ENCODE measurements at regions of chr6 and their contacts with region 1.

Region 1: GRCh38 chr6:108558372-108559096 is 2.2 kb upstream of the FOXO3 start:
- DNase-seq: peak; percentile 97
- H3K4me3 Mint-ChIP-seq: peak overlapping the region; percentile 97
- H3K27ac Mint-ChIP-seq: peak overlapping the region; percentile 98
- H3K4me1 Mint-ChIP-seq: peaks cover 28% of the 10 kb centered on the region
- H3K27me3 Mint-ChIP-seq: peaks cover 21% of the 10 kb centered on the region

Region 2: DNA sequence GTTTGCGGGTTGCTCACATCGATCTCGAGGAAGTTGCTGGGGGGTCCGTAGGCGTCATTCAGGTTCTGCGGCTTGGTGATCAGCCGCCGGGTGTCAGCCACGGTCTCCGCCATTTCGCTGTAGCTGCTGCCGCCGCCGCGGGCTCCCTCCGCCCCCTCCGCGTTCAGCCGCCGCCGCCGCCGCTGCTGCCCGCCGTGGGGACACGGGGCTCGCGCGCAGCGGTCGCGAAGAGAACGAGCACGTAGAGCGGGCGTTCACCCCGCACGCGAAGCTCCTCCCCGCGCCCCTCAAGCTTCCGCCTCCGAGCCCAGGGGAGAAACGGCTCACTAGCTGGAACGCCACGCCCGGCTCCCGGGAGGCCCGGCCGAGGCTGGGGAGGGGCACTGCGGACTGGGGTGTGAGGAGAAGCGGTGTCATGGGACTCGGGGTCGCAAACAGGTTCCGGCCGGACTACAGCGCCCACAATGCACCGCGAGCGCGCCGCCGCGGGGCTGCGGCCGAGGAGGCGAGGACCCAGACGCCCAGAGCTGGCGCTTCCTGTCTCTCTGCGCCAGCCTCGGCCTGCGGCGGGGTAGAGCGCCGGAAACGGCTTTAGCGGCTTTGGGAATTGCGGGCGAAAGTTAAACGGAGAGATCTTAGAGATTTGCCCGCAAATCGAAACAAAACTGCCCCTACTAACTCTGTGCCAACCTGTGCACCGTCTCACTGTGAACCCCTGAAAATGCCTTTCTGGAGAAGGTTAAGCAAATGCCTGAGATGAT is 297.5 kb before region 1 on chr6 and contains the start of gene SNX3:
- CTCF ChIA-PET with region 1: no interaction called
- POLR2A ChIA-PET with region 1: interaction called, 10 read pairs
- DNase-seq: peak; percentile 91
- H3K4me3 Mint-ChIP-seq: peak within 1 kb of the TSS; percentile 73
- H3K27ac Mint-ChIP-seq: peak within 1 kb of the TSS; percentile 77
- H3K4me1 Mint-ChIP-seq: peaks cover 24% of the 10 kb centered on the region
- H3K27me3 Mint-ChIP-seq: peaks cover 2% of the 10 kb centered on the region
- total RNA-seq, gene SNX3: 85.0 to 86.3 TPM

Region 3: GRCh38 chr6:108598305-108598863 is 39.9 kb after region 1 on chr6:
- CTCF ChIA-PET with region 1: no interaction called
- POLR2A ChIA-PET with region 1: interaction called, 14 read pairs
- DNase-seq: peak; percentile 31
- H3K4me3 Mint-ChIP-seq: no peak overlapping the region
- H3K27ac Mint-ChIP-seq: peak overlapping the region; percentile 44
- H3K4me1 Mint-ChIP-seq: peaks cover 31% of the 10 kb centered on the region
- H3K27me3 Mint-ChIP-seq: no peaks in the 10 kb centered on the region

Region 4: DNA sequence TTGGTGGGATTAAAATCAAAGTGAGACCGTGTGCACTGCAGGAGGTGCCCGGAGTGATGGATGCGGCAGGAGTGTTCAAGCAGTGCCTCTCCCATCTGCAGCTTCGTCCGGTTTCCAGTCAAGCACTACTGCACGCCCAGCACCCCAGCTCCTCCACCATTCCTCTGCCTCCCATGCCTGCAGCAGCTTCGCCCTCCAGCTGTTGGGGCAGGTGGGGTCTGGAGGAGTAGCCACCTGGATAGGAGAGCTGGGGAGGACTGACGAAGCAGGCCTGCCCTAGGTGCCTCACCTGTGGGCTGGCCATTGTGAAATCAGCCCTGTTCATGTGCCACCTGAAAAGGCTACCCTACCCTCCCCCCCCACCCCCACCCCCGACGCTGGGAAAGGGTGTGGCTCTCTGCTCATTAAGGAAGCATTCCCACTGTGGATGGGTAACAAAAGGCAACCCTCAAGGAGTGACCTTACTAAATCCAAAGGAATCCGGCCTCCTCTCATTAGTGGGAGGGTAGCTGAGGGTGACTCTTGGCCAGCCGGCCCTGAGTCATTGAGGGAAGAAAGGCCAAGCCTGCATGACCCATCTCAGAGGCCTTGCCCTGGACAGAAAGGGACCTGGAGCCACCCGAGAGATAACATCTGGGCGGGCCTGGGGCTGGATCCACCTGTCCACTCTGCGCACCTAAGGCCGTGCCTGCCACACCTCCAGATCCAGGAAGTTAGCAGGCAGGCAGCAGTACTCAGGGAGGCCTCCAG is 173.8 kb after region 1 on chr6:
- CTCF ChIA-PET with region 1: no interaction called
- POLR2A ChIA-PET with region 1: no interaction called
- DNase-seq: no peak
- H3K4me3 Mint-ChIP-seq: no peak overlapping the region
- H3K27ac Mint-ChIP-seq: no peak overlapping the region
- H3K4me1 Mint-ChIP-seq: no peaks in the 10 kb centered on the region
- H3K27me3 Mint-ChIP-seq: peaks cover 1% of the 10 kb centered on the region

Region 5: DNA sequence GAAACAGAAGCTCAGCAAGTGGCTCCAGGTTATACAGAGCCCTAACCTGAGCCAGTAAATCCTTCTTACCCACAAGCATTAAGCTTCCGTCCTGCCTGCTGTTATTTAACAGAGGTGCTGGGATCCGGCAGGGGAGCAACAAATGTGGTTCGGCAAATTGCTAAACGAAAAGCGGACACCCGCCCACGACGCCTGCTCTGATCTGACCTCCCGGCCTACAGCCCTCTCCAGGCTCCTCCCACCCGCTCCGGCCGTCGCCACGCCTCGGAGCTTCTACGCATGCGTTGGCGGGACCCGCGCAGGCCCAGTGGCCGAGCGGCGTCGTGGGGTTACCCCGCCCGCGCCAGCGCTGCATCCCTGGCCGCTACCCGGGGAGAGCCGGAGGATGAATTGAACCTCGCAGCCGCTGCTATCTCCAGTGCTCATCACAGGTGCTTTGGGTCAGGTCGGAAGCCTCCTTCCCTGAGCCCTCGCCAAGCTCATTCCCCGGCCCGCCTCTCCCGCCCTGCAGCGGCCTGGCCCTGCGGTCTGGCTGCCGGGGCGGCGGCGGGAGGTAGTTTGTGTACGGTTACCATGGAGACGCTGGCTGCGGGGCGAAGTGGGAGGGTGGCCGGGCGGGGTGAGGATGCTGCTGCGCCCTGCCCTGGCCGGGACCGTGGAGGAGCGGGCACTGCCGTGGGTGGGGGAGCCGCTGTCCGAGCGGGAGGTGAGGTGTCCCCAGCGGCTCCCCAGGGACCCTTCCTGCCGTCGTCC is 289.8 kb after region 1 on chr6 and contains the start of gene ARMC2:
- CTCF ChIA-PET with region 1: interaction called, 3 read pairs
- POLR2A ChIA-PET with region 1: interaction called, 20 read pairs
- DNase-seq: peak; percentile 89
- H3K4me3 Mint-ChIP-seq: peak within 1 kb of the TSS; percentile 77
- H3K27ac Mint-ChIP-seq: peak within 1 kb of the TSS; percentile 70
- H3K4me1 Mint-ChIP-seq: peaks cover 34% of the 10 kb centered on the region
- H3K27me3 Mint-ChIP-seq: no peaks in the 10 kb centered on the region
- total RNA-seq, gene ARMC2: 12.2 to 13.6 TPM

Region 6: GRCh38 chr6:109073344-109074132 is 515.0 kb after region 1 on chr6:
- CTCF ChIA-PET with region 1: interaction called, 4 read pairs
- POLR2A ChIA-PET with region 1: interaction called, 16 read pairs
- DNase-seq: peak; percentile 47
- H3K4me3 Mint-ChIP-seq: no peak overlapping the region
- H3K27ac Mint-ChIP-seq: no peak overlapping the region
- H3K4me1 Mint-ChIP-seq: peaks cover 21% of the 10 kb centered on the region
- H3K27me3 Mint-ChIP-seq: no peaks in the 10 kb centered on the region